ENCODE measurements at regions of chr2 and their contacts with region 1.

Region 1: GRCh38 chr2:191265311-191266170 is 20.3 kb downstream of the MYO1B start:
- DNase-seq: no peak
- ATAC-seq: no peak
- H3K4me3 ChIP-seq: no peak overlapping the region
- H3K4me3 Mint-ChIP-seq: no peak overlapping the region
- H3K27ac ChIP-seq: no peak overlapping the region
- H3K27ac Mint-ChIP-seq: no peak overlapping the region
- H3K4me1 ChIP-seq: peaks cover 1 to 2% of the 10 kb centered on the region in 2 donors
- H3K4me1 Mint-ChIP-seq: peaks cover 2% of the 10 kb centered on the region
- H3K27me3 ChIP-seq: no peaks in the 10 kb centered on the region
- H3K27me3 Mint-ChIP-seq: peaks cover 3% of the 10 kb centered on the region
- CTCF ChIP-seq: no peak

Region 2: GRCh38 chr2:191280304-191280703 is 14.8 kb after region 1 on chr2:
- CTCF ChIA-PET with region 1: no interaction called
- POLR2A ChIA-PET with region 1: no interaction called
- intact Hi-C with region 1: no loop called
- DNase-seq: no peak
- ATAC-seq: no peak
- H3K4me3 ChIP-seq: no peak overlapping the region
- H3K4me3 Mint-ChIP-seq: no peak overlapping the region
- H3K27ac ChIP-seq: no peak overlapping the region
- H3K27ac Mint-ChIP-seq: no peak overlapping the region
- H3K4me1 ChIP-seq: peaks cover 9 to 22% of the 10 kb centered on the region in 2 donors
- H3K4me1 Mint-ChIP-seq: peaks cover 35% of the 10 kb centered on the region
- H3K27me3 ChIP-seq: no peaks in the 10 kb centered on the region
- H3K27me3 Mint-ChIP-seq: no peaks in the 10 kb centered on the region
- CTCF ChIP-seq: no peak

Region 3: GRCh38 chr2:191302459-191303139 is 37.1 kb after region 1 on chr2:
- CTCF ChIA-PET with region 1: interaction called, 3 read pairs
- POLR2A ChIA-PET with region 1: no interaction called
- intact Hi-C with region 1: loop called (anchors 1 kb)
- DNase-seq: peak; percentile 57
- ATAC-seq: peak; percentile 53
- H3K4me3 ChIP-seq: no peak overlapping the region
- H3K4me3 Mint-ChIP-seq: no peak overlapping the region
- H3K27ac ChIP-seq: no peak overlapping the region
- H3K27ac Mint-ChIP-seq: no peak overlapping the region
- H3K4me1 ChIP-seq: peaks cover 4 to 8% of the 10 kb centered on the region in 2 donors
- H3K4me1 Mint-ChIP-seq: peaks cover 10% of the 10 kb centered on the region
- H3K27me3 ChIP-seq: no peaks in the 10 kb centered on the region
- H3K27me3 Mint-ChIP-seq: peaks cover 7% of the 10 kb centered on the region
- CTCF ChIP-seq: peak; percentile 47

Region 4: DNA sequence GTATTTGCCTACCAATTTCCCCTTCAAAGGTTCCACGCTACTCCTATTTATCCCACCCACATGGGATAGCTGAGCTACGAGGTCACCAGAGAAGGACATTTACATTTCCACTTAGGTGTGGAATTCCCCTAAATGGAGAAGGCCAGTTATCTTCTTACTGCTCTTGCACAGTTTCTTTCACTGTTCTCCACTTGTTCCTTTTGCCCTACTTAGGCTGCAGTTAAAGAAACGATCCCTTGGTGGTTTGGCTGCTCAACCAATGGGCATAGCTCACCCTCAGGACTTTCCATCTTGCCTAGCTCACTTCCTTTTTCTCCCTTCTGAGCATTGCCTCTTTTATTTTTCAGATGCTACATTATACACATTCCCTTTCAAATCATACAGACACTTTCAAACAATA is 401.2 kb after region 1 on chr2:
- CTCF ChIA-PET with region 1: no interaction called
- POLR2A ChIA-PET with region 1: no interaction called
- intact Hi-C with region 1: no loop called
- DNase-seq: peak; percentile 61
- ATAC-seq: peak; percentile 72
- H3K4me3 ChIP-seq: no peak overlapping the region
- H3K4me3 Mint-ChIP-seq: peak overlapping the region; percentile 0
- H3K27ac ChIP-seq: peak overlapping the region; percentile 11 to 14
- H3K27ac Mint-ChIP-seq: peak overlapping the region; percentile 3
- H3K4me1 ChIP-seq: peaks cover 15 to 16% of the 10 kb centered on the region in 2 donors
- H3K4me1 Mint-ChIP-seq: peaks cover 17% of the 10 kb centered on the region
- H3K27me3 ChIP-seq: no peaks in the 10 kb centered on the region
- H3K27me3 Mint-ChIP-seq: no peaks in the 10 kb centered on the region
- CTCF ChIP-seq: no peak

Measured in B cell (primary cell).